Activated CD4-positive, alpha-beta T cell treated with anti-CD3 and anti-CD28 coated beads, Interleukin-2, amount 10 ng/mL, durations not matched to agents 24 days and 14 days (primary cell): ENCODE measurements at regions of chr2 and their contacts with region 1.

Region 1: GRCh38 chr2:110748489-110748867 is 16.1 kb downstream of the ACOXL start:
- DNase-seq: peak; percentile 94
- H3K4me3 Mint-ChIP-seq: peak overlapping the region; percentile 76
- H3K27ac Mint-ChIP-seq: peak overlapping the region; percentile 64
- H3K4me1 Mint-ChIP-seq: peaks cover 31% of the 10 kb centered on the region
- H3K27me3 Mint-ChIP-seq: peaks cover 51% of the 10 kb centered on the region

Region 2: GRCh38 chr2:110157153-110157793 is 591.2 kb before region 1 on chr2:
- intact Hi-C with region 1: loop called (anchors 10 kb)
- DNase-seq: peak; percentile 78
- H3K4me3 Mint-ChIP-seq: no peak overlapping the region
- H3K27ac Mint-ChIP-seq: no peak overlapping the region
- H3K4me1 Mint-ChIP-seq: peaks cover 20% of the 10 kb centered on the region
- H3K27me3 Mint-ChIP-seq: peaks cover 13% of the 10 kb centered on the region

Region 3: GRCh38 chr2:110804915-110805314 is 56.4 kb after region 1 on chr2:
- intact Hi-C with region 1: loop called (anchors 2 kb)
- DNase-seq: peak; percentile 82
- H3K4me3 Mint-ChIP-seq: peak overlapping the region; percentile 12
- H3K27ac Mint-ChIP-seq: peak overlapping the region; percentile 18
- H3K4me1 Mint-ChIP-seq: peaks cover 17% of the 10 kb centered on the region
- H3K27me3 Mint-ChIP-seq: peaks cover 55% of the 10 kb centered on the region

Region 4: GRCh38 chr2:110853507-110853906 is 105.0 kb after region 1 on chr2:
- intact Hi-C with region 1: loop called (anchors 2 kb)
- DNase-seq: peak; percentile 84
- H3K4me3 Mint-ChIP-seq: no peak overlapping the region
- H3K27ac Mint-ChIP-seq: peak overlapping the region; percentile 64
- H3K4me1 Mint-ChIP-seq: peaks cover 67% of the 10 kb centered on the region
- H3K27me3 Mint-ChIP-seq: peaks cover 31% of the 10 kb centered on the region

Region 5: DNA sequence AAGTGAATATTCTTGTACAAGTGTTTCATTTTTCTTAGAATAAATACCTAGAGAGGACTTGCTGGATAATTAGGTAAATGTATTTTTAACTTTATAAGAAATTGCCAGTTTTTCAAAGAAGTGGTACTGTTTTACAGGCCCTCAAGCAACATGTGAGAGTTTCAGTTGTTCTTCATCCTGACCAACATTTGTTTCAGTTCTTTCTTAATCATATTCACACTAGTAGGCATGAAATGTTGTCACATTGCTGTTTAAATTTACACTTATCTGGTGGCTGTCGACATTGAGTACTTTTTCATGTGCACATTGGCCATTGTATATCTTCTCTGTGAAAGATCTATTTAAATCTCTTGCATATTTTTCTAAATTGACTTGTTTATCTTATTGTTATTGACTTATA is 161.9 kb after region 1 on chr2:
- intact Hi-C with region 1: no loop called
- DNase-seq: no peak
- H3K4me3 Mint-ChIP-seq: no peak overlapping the region
- H3K27ac Mint-ChIP-seq: no peak overlapping the region
- H3K4me1 Mint-ChIP-seq: no peaks in the 10 kb centered on the region
- H3K27me3 Mint-ChIP-seq: peaks cover 25% of the 10 kb centered on the region

Region 6: GRCh38 chr2:111054791-111055691 is 306.6 kb after region 1 on chr2:
- intact Hi-C with region 1: loop called (anchors 5 kb)
- DNase-seq: peak; percentile 61
- H3K4me3 Mint-ChIP-seq: peak overlapping the region; percentile 50
- H3K27ac Mint-ChIP-seq: peak overlapping the region; percentile 71
- H3K4me1 Mint-ChIP-seq: peaks cover 30% of the 10 kb centered on the region
- H3K27me3 Mint-ChIP-seq: peaks cover 41% of the 10 kb centered on the region

Region 7: GRCh38 chr2:111883661-111884591 is 1135.4 kb after region 1 on chr2 and contains the start of gene ANAPC1:
- intact Hi-C with region 1: no loop called
- DNase-seq: peak; percentile 96
- H3K4me3 Mint-ChIP-seq: peak within 1 kb of the TSS; percentile 93
- H3K27ac Mint-ChIP-seq: peak within 1 kb of the TSS; percentile 93
- H3K4me1 Mint-ChIP-seq: peaks cover 12% of the 10 kb centered on the region
- H3K27me3 Mint-ChIP-seq: no peaks in the 10 kb centered on the region
- total RNA-seq, gene ANAPC1: 129 and 133 TPM in 2 replicates